ENCODE measurements at regions of chr10 and their contacts with region 1.

Region 1: DNA sequence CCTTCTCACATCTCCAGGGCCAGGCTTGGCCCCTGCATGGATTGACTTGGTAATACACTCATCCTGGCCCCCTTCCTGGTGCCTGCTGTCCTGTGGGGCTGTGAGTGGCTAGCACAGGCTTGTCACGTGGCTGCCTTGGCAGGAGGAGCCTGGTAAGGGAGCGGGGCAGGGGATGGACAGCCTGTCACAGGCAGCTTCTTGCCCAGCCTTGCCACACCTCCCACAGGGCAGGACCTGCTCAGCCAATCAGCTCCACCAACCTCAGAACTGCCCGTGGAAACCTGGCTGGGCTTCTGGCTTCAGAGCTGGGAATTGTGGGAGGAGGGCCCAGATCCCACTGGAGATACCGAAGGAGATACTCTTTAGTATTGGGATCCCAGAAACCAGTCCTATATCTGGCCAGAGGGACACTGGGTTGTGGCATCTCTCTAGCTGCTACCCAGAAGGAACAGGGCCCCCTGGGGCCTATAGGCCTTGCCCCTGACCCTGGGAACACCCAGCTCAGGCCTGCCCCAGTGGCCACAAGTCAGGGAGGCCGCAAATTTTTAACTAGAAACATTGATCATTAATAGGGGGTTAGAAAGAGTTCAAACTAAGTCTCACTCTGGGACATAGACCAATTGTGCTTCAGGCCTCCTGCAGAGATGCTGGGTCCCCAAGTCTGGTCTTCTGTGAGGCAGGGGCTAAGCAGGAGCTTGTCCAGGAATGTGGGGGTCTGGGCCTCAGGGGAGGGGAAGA is at the start of gene HOGA1:
- DNase-seq: peak; percentile 84
- ATAC-seq: peak; percentile 100
- H3K4me3 ChIP-seq: peak within 1 kb of the TSS in 1 of 2 experiments; percentile 23; a peak in 2 of 4 replicates
- H3K27ac ChIP-seq: peak within 1 kb of the TSS; percentile 27
- H3K4me1 ChIP-seq: peaks cover 13 to 21% of the 10 kb centered on the region in 2 experiments
- H3K27me3 ChIP-seq: no peaks in the 10 kb centered on the region
- CTCF ChIP-seq: no peak
- POLR2A ChIP-seq: no peak
- RAD21 ChIP-seq: no peak
- total RNA-seq, gene HOGA1: 1.6 TPM

Region 2: DNA sequence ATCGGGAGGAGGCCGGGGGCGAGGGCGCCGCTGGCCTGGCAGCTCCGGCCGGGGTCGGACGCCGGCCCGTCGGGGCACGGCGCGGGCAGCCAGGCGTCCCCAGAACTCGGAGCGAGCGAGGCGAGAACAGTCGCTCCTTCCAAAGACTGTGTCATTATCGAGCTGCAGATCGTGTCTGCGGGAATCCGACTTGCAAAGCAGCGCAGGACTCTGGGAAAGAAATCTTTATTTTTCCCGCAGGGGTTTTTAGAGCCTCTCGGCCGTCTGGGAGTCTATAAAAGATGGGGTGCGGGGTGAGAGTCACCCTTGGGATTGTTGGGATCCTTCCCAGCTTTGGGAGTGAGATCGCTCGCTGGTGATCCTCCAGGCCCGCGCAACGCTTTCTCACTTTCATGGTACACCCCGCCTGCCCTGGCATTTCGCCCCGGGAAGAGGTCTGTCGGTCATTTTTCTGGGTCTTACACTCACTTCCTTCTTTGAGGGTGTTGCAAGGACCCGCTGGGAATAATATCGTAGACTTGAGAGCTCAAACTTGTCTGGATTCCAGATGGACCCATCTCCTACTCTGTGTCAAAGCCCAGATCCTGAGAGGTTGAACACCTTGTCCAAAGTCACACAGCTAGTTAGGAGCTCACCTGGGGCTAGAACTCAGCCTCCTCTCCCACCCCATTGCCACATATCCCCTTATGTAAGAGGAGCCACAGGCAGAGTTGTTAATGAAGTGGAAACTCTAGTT is 84.5 kb before region 1 on chr10:
- CTCF ChIA-PET with region 1: no interaction called
- POLR2A ChIA-PET with region 1: no interaction called
- RAD21 ChIA-PET with region 1: no interaction called
- intact Hi-C with region 1: no loop called
- DNase-seq: no peak
- ATAC-seq: no peak
- H3K4me3 ChIP-seq: peak overlapping the region; percentile 76 to 81
- H3K27ac ChIP-seq: peak overlapping the region; percentile 94; the same call in 1 of the 2 replicates
- H3K4me1 ChIP-seq: peaks cover 9 to 17% of the 10 kb centered on the region in 2 experiments; a peak in 3 of 4 replicates
- H3K27me3 ChIP-seq: no peaks in the 10 kb centered on the region
- CTCF ChIP-seq: no peak
- POLR2A ChIP-seq: no peak
- RAD21 ChIP-seq: no peak

Region 3: GRCh38 chr10:97572214-97572989 is 11.8 kb before region 1 on chr10 and contains the start of gene ANKRD2:
- CTCF ChIA-PET with region 1: interaction called, 13 read pairs
- POLR2A ChIA-PET with region 1: interaction called, 11 read pairs
- RAD21 ChIA-PET with region 1: no interaction called
- intact Hi-C with region 1: no loop called
- DNase-seq: peak; percentile 59
- ATAC-seq: peak; percentile 78
- H3K4me3 ChIP-seq: peak within 1 kb of the TSS in 1 of 2 experiments; percentile 51; a peak in 2 of 4 replicates
- H3K27ac ChIP-seq: peak within 1 kb of the TSS; percentile 68
- H3K4me1 ChIP-seq: peaks cover 53 to 60% of the 10 kb centered on the region in 2 experiments
- H3K27me3 ChIP-seq: no peaks in the 10 kb centered on the region
- CTCF ChIP-seq: peak; percentile 85 to 97 (median 93)
- POLR2A ChIP-seq: no peak
- RAD21 ChIP-seq: peak; percentile 93
- total RNA-seq, gene ANKRD2: 0.15 TPM

Region 4: DNA sequence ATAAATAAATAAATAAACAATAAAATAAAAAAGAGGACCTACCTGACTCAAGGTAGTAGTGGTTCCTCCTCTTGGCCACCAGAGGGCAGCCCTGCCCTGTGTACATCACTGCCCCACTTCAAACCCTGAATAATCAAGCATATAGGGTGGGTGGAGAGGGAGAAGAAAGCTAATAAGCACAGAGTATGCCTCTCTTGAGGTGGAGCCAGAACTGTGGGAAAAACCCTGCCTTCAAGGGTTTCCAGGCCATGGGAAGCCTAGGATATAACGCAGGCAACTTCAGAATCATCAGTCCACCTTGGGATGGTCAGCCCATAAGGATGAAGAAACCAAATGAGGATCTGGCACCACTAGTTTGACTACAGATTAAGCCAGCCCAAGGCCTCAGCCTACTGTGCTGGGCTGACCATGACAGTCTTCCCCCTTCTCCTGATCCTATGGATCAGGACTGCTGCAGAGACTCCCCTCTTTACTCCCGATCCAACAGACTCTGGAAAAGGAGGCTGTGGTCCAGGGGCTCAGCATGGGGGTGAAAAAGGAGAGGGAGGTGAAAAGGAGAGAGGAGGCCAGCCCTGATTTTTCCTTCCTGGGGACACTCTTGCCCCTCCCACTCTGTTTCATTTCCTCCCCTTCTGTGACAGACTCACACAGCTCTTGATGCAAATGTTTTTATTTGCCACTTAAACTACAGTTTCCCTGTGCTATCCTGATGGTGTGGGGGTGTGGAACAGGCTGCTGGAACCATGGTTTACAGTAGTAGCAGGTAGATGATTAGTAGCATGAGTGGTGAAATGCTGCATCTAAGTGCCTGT is 92.7 kb after region 1 on chr10:
- CTCF ChIA-PET with region 1: no interaction called
- POLR2A ChIA-PET with region 1: no interaction called
- RAD21 ChIA-PET with region 1: no interaction called
- intact Hi-C with region 1: no loop called
- DNase-seq: no peak
- ATAC-seq: peak; percentile 86
- H3K4me3 ChIP-seq: no peak overlapping the region
- H3K27ac ChIP-seq: 0 out of 2 replicates have a peak overlapping the region, but pooled peaks have one; percentile 20
- H3K4me1 ChIP-seq: peaks cover 0 to 15% of the 10 kb centered on the region in 2 experiments; a peak in 3 of 4 replicates
- H3K27me3 ChIP-seq: no peaks in the 10 kb centered on the region
- CTCF ChIP-seq: peak; percentile 71 to 88 (median 85)
- POLR2A ChIP-seq: no peak
- RAD21 ChIP-seq: peak; percentile 87